Left colon (tissue), 2 donors: ENCODE measurements at regions of chr1 and their contacts with region 1.

Region 1: DNA sequence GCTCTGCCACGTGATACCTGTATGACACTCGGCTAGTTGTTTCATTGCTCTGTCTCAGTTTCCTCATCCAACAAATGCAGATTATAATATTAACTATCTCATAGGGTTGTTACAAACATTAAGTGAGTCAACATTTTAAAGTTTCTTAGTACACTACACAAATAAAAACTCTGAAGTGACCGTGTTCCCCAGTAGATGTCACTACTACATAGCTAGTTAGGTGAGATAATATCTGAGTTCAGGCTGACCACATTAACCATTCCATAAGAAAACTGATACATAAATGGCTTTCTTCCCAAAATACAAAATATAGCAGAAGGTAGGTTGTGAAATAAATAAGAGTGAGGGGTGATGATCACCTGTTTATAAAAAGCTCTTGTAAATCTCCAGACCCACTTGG is 214.1 kb downstream of the NUF2 start:
- DNase-seq: no peak
- ATAC-seq: no peak

Region 2: GRCh38 chr1:163410073-163410999 is 125.5 kb before region 1 on chr1:
- intact Hi-C with region 1: loop called in 1 of 2 experiments (anchors 5 kb)
- DNase-seq: peak in 1 of 2 donors; percentile 56
- ATAC-seq: no peak

Region 3: GRCh38 chr1:165073185-165074007 is 1537.6 kb after region 1 on chr1:
- intact Hi-C with region 1: loop called in 1 of 2 experiments (anchors 10 kb)
- DNase-seq: no peak
- ATAC-seq: peak; percentile 53